ENCODE measurements at regions of chr2 and their contacts with region 1.

Region 1: GRCh38 chr2:45889053-45889452 is 237.6 kb downstream of the PRKCE start:
- DNase-seq: no peak
- ATAC-seq: peak; percentile 36 to 59

Region 2: DNA sequence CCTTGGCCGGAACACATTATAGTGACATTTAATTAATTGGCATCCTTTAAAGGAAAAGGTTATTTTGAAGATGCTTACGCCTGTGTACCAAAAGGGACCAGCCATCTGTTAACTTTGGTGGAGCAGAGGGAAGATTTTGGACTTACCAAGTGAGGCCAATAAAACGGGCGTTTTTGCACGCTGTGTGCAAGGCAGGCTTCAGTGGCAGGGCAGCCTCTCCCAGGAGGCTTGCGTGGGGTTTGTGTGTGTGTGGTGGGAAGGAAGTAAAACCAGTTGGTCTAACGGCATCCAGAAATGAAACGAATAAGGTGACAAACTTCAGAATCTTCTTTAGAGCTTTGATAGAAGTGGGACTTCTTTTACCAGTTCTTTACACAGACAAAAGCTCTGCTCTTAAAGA is 45.9 kb before region 1 on chr2:
- intact Hi-C with region 1: loop called in 1 of 2 experiments (anchors 5 kb)
- DNase-seq: no peak
- ATAC-seq: no peak

Region 3: GRCh38 chr2:45922571-45922988 is 33.5 kb after region 1 on chr2:
- intact Hi-C with region 1: loop called in 1 of 2 experiments (anchors 5 kb)
- DNase-seq: peak; percentile 70
- ATAC-seq: peak; percentile 87 to 92